Right lobe of liver (tissue), 6 donors: ENCODE measurements at regions of chr5 and their contacts with region 1.

Region 1: DNA sequence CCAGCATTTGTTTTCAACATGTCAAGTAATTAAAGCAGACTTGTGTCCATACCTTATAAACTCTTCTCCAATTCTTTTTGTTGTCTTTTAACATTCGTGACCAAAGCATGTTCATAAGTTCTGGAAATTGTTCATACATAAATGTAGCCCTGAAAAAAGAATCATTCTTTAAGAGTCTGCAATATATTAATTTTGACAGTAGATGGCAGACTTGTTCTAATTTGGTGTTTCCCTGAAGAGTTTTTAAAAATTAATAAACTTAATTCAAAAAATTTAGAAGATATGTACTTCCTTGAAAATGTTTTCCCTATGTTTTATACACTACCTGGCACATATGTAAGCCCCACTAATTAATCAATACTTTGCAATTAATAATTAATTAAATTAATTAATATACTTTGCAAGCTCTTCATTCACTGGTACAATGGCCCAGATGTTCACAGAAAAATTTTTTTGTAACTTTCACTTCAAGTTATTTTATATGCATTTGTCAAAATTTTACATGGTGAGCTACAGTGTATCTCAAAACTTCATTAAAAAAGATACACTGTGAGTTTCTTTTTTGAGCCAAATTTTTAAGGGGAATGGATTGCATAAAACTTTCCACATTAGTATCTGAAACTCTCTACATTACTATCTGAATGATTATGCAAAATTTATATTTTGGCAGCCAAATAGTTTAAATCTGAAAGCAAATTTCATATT is 42.1 kb downstream of the CLINT1 start:
- DNase-seq: no peak
- ATAC-seq: peak in 3 of 4 donors; percentile 39 to 46 (median 40)
- H3K4me3 ChIP-seq: no peak overlapping the region
- H3K27ac ChIP-seq: no peak overlapping the region
- H3K4me1 ChIP-seq: peaks cover 0 to 20% (median 10%) of the 10 kb centered on the region in 4 donors
- H3K27me3 ChIP-seq: no peaks in the 10 kb centered on the region
- CTCF ChIP-seq: peak; percentile 53 to 63 (median 60)
- POLR2A ChIP-seq: no peak

Region 2: DNA sequence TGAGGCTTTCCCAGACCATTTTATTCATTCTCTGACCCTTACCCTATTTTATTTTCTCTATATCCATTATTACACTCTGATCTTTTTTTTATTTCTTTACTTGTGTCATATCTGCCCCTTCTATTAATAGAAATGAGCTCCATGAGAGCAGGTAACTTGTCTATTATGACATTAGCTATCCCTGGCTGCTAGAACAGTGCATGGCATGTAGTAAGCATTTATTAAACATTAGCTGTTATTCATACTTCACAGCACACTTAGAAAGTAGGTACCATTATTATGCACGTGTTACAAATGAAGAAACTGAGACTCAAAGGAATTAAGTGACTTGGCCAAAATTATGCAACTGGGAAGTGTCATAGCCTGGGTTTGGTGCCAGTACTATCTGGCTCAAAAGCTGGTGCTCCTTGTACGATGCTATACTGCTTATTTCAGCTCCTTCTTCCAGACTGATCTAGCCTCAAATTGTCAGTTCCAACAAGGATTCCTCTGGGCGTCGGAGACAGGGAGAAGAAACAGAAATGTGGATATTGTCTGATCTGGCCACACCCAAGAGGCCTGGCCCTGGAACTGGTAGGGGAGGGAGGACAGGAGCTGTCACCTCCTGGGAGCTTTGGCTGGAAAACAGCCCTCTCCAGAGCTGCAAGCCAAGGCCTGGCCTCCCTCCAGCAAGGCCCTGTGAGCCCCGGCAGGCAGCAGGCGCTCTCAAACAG is 367.7 kb before region 1 on chr5:
- intact Hi-C with region 1: no loop called
- DNase-seq: no peak
- ATAC-seq: peak; percentile 14 to 54 (median 32)
- H3K4me3 ChIP-seq: no peak overlapping the region
- H3K27ac ChIP-seq: no peak overlapping the region
- H3K4me1 ChIP-seq: no peaks in the 10 kb centered on the region
- H3K27me3 ChIP-seq: no peaks in the 10 kb centered on the region
- CTCF ChIP-seq: no peak
- POLR2A ChIP-seq: no peak

Region 3: GRCh38 chr5:157948738-157949410 is 132.0 kb after region 1 on chr5:
- intact Hi-C with region 1: loop called in 1 of 2 experiments (anchors 10 kb)
- DNase-seq: peak; percentile 79 to 87 (median 81)
- ATAC-seq: peak; percentile 100
- H3K4me3 ChIP-seq: no peak overlapping the region
- H3K27ac ChIP-seq: no peak overlapping the region
- H3K4me1 ChIP-seq: no peaks in the 10 kb centered on the region
- H3K27me3 ChIP-seq: no peaks in the 10 kb centered on the region
- CTCF ChIP-seq: peak; percentile 87 to 93 (median 90)
- POLR2A ChIP-seq: no peak